ENCODE measurements at regions of chr7 and their contacts with region 1.

Region 1: DNA sequence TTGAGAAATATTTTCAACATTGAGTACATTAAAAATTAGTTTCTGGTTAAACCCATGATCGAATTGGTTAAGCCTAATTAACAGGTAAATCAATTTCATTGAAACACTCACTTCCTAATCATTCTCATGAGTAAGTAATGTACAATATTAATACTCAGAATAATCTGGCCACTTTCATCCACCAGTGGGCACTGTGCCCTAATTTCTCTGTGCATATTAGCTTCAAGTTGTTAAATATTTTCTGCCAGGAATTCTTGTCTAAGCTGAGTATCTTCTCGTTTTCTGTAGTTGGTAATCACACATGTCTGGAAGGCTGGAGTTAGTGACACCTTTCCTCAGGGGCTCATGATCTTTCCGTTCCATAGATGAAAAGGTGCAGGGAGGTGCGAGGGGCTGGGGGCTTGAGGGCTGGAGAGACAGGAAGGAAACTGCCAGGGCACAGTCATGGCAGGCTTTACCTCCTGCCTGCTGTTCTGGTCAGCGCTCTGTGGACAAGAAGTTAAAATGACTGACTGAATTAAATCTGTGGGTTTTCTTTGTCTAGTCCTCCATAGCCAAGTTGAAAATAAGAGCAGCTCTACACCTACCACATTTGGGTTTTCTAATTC is 71.9 kb downstream of the WIPF3 start:
- DNase-seq: peak; percentile 55
- H3K4me3 ChIP-seq: no peak overlapping the region
- H3K27ac ChIP-seq: no peak overlapping the region
- H3K4me1 ChIP-seq: no peaks in the 10 kb centered on the region
- CTCF ChIP-seq: peak; percentile 91

Region 2: DNA sequence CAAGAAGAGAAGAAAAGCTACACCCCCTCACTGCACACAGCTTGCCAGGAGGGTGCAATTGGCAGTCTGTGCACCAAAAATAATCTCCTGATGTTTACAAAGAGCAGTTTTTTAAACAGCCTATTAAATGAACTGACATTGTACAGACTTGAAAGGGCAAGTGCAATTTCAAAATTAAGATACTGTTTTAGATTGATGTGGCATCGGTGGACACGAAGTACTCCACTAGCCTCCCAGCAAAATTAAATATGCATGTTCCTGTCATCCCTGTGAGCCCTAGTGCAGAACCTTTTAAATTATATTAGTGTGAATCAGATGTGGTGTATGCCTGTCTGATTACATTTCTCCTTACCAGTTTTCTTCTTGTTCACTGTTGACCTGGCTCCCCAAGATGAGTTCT is 16.1 kb after region 1 on chr7:
- CTCF ChIA-PET with region 1: no interaction called
- POLR2A ChIA-PET with region 1: no interaction called
- intact Hi-C with region 1: no loop called
- DNase-seq: no peak
- H3K4me3 ChIP-seq: no peak overlapping the region
- H3K27ac ChIP-seq: no peak overlapping the region
- H3K4me1 ChIP-seq: no peaks in the 10 kb centered on the region
- CTCF ChIP-seq: no peak

Region 3: GRCh38 chr7:29921404-29922010 is 43.3 kb after region 1 on chr7:
- CTCF ChIA-PET with region 1: no interaction called
- POLR2A ChIA-PET with region 1: interaction called, 3 read pairs
- intact Hi-C with region 1: loop called (anchors 2 kb)
- DNase-seq: peak; percentile 68
- H3K4me3 ChIP-seq: no peak overlapping the region
- H3K27ac ChIP-seq: no peak overlapping the region
- H3K4me1 ChIP-seq: no peaks in the 10 kb centered on the region
- CTCF ChIP-seq: peak; percentile 97